ENCODE measurements at regions of chr6 and their contacts with region 1.

Region 1: GRCh38 chr6:11232193-11232769 is at the start of gene NEDD9:
- DNase-seq: peak; percentile 98
- ATAC-seq: peak; percentile 96
- H3K4me3 Mint-ChIP-seq: peak within 1 kb of the TSS; percentile 84
- H3K27ac Mint-ChIP-seq: peak within 1 kb of the TSS; percentile 99
- H3K4me1 Mint-ChIP-seq: peaks cover 60% of the 10 kb centered on the region
- H3K27me3 Mint-ChIP-seq: no peaks in the 10 kb centered on the region
- CTCF ChIP-seq: no peak
- total RNA-seq, gene NEDD9: 26.6 to 29.7 TPM

Region 2: DNA sequence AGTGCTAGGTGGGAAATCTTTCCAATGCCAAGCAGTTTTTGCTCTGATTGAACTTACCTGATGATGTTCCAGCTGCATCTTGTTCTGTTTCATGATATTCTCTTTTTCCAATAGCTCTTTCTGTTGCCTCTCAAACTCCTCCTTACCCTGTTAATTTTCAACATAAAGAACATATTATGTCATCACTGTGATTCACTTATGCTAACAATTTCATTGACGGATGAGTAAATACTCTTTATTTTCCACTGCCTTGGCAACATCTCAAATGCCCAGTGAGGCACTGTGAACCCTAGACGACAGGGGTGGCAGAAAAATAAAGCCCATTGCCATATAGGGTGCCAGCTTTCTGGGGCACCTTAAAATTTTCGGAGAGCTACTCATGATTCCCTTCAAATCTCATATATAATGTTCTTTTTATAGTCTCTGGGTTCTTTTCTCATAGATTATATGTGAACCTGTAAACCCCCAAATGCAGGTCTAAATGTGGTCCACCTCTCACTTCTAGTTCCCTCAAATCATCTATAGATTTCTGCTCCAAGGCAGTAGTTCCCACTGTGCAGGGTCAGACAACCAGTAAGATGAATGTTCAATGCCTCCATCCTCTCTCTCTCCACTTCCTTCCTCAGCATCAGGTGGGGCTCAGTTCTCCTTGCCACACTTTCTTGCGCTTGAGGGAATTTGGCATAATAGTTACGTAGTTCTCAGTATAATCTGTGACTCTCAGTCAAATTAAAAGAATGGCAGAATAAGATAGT is 43.9 kb before region 1 on chr6:
- CTCF ChIA-PET with region 1: no interaction called
- POLR2A ChIA-PET with region 1: no interaction called
- intact Hi-C with region 1: no loop called
- DNase-seq: no peak
- ATAC-seq: no peak
- H3K4me3 Mint-ChIP-seq: no peak overlapping the region
- H3K27ac Mint-ChIP-seq: peak overlapping the region; percentile 8
- H3K4me1 Mint-ChIP-seq: peaks cover 4% of the 10 kb centered on the region
- H3K27me3 Mint-ChIP-seq: no peaks in the 10 kb centered on the region
- CTCF ChIP-seq: no peak

Region 3: DNA sequence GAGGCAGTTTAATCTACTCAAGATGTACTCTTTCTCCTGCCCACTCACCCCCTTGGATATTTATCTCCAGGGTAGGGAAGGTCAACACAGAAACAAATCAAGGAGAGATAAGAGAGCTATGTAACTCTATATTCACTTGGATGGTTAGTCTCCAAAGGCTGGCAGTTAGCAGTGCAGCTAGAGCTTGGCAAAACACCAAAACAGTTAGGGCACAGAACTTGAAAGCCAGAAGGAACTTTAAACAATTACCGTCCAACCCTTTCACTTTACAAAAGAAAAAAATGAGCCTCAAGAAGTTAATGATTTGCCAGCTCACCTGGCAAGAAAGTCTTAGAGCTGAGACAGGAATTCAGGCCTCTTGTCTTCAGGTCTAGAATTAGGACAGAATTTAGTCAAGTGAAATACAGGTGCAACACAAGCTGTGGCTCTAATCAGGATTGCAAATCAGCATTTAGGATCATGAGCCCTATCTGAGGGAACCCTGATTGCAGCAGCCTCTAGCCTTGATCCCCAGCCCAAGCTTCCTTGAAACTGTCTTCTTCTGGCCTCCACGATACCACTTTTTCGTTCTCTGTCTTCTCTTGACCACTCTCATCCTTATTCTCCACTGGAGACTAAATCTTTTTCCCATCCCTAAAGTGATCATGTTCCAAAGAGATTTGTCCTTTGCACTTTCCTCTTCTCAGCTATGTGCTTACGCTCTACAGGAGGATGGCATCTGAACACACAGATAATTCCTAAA is 14.8 kb before region 1 on chr6:
- CTCF ChIA-PET with region 1: interaction called, 11 read pairs
- POLR2A ChIA-PET with region 1: interaction called, 4 read pairs
- intact Hi-C with region 1: no loop called
- DNase-seq: no peak
- ATAC-seq: no peak
- H3K4me3 Mint-ChIP-seq: no peak overlapping the region
- H3K27ac Mint-ChIP-seq: no peak overlapping the region
- H3K4me1 Mint-ChIP-seq: peaks cover 41% of the 10 kb centered on the region
- H3K27me3 Mint-ChIP-seq: no peaks in the 10 kb centered on the region
- CTCF ChIP-seq: no peak

Region 4: DNA sequence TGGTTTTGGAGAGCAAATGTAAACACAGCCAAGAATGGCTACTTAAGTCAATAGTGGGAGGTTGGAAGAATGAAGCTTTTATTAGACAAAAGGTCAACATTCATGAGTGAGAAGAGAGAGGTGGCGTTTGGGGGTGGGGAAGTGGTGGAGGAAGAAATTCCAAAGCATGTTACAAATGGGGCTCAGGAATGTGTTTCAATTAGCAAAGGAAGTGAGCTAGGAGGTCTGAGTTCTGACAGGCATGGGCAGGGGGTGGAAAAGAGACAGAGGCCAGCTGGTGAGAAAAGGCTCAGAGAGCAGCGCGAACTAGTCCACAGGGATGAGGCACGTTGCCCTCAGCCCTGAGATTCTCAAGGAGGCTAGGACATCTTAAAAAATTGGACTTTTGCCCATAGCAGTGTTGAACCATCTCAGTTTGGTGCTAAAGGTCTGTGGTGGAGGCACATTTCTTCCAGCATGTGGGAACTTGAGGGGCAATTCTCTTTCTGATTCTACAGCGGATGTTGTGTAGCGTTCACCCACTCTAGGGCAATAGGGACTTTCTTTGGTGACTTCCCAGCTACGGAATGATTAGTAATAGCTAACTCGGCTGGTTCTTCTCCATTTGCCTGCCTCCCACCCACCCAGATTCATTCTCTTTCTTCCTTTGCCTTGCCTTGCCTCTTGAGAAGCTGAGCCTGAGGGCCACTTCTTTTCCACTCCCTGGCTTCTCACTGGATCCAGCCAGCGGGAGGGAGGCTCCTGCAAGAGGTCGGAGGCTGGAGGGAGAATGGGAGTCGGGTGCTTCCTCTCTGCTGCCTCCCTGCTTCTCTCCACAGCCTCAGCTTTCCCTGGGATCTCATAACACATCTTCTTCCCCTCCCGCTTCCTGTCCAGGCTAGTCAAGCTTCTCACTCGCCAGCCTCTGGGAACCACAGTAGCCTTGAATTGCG is 45.3 kb after region 1 on chr6:
- CTCF ChIA-PET with region 1: interaction called, 3 read pairs
- POLR2A ChIA-PET with region 1: interaction called, 4 read pairs
- intact Hi-C with region 1: loop called (anchors 5 kb)
- DNase-seq: peak; percentile 48
- ATAC-seq: peak; percentile 65
- H3K4me3 Mint-ChIP-seq: peak overlapping the region; percentile 39
- H3K27ac Mint-ChIP-seq: peak overlapping the region; percentile 88
- H3K4me1 Mint-ChIP-seq: peaks cover 45% of the 10 kb centered on the region
- H3K27me3 Mint-ChIP-seq: no peaks in the 10 kb centered on the region
- CTCF ChIP-seq: no peak

Region 5: GRCh38 chr6:11307226-11307625 is 74.9 kb after region 1 on chr6:
- CTCF ChIA-PET with region 1: no interaction called
- POLR2A ChIA-PET with region 1: no interaction called
- intact Hi-C with region 1: no loop called
- DNase-seq: peak; percentile 37
- ATAC-seq: peak; percentile 87
- H3K4me3 Mint-ChIP-seq: no peak overlapping the region
- H3K27ac Mint-ChIP-seq: peak overlapping the region; percentile 53
- H3K4me1 Mint-ChIP-seq: peaks cover 38% of the 10 kb centered on the region
- H3K27me3 Mint-ChIP-seq: no peaks in the 10 kb centered on the region
- CTCF ChIP-seq: no peak

Region 6: GRCh38 chr6:11317885-11318771 is 85.8 kb after region 1 on chr6:
- CTCF ChIA-PET with region 1: no interaction called
- POLR2A ChIA-PET with region 1: interaction called, 4 read pairs
- intact Hi-C with region 1: loop called (anchors 1 kb)
- DNase-seq: peak; percentile 92
- ATAC-seq: peak; percentile 93
- H3K4me3 Mint-ChIP-seq: no peak overlapping the region
- H3K27ac Mint-ChIP-seq: peak overlapping the region; percentile 91
- H3K4me1 Mint-ChIP-seq: peaks cover 52% of the 10 kb centered on the region
- H3K27me3 Mint-ChIP-seq: no peaks in the 10 kb centered on the region
- CTCF ChIP-seq: no peak